ENCODE measurements at regions of chr1 and their contacts with region 1.

Region 1: DNA sequence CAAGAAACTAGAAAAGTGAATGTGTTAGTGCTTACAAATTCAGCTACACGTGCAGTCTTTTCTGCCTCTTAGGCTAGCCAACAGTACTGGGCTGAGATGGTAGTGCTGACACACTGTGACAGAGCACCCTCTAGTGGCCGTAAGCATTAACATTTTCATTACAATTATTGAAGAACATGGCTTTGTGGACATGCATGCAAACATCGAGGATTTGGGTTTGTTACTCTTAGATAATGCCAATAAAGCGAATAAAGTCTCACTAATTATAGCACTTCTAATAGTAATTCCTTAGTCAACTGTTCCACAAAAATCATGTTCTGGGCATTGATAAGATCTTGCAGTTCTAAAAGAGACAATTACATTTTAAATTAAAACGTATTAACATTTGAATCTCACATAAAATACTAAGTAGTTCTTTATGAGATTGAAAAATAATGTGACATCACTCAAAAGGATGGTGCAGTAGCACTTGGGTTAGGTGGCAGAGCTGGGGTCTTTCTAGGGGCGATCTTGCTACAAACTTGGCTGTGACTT is 47.1 kb downstream of the MYSM1 start:
- DNase-seq: peak; percentile 53 to 67
- H3K4me3 ChIP-seq: no peak overlapping the region
- H3K27ac ChIP-seq: no peak overlapping the region
- H3K4me1 ChIP-seq: no peaks in the 10 kb centered on the region
- H3K27me3 ChIP-seq: no peaks in the 10 kb centered on the region
- CTCF ChIP-seq: peak; percentile 61 to 94 (median 76)
- POLR2A ChIP-seq: no peak

Region 2: DNA sequence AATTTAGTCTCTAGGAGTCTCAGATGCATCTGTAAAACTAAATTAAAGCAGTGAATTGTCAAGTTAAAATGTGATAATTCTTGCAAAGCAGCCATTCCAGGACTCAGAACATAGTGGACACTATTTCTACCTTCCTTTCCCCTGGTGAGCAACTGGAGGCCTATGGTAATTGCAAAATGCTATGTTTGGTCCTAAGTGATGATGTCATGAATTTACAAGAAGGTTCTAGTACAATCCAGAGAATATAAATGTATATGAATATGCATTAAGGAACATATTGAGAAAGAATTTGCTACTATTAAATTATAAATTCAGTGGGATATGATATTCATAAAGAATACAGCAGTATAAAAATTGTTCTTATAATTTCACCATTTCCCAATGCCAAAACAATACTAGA is 138.8 kb before region 1 on chr1:
- intact Hi-C with region 1: loop called (anchors 5 kb)
- DNase-seq: no peak
- H3K4me3 ChIP-seq: no peak overlapping the region
- H3K27ac ChIP-seq: no peak overlapping the region
- H3K4me1 ChIP-seq: no peaks in the 10 kb centered on the region
- H3K27me3 ChIP-seq: no peaks in the 10 kb centered on the region
- CTCF ChIP-seq: no peak
- POLR2A ChIP-seq: no peak

Region 3: DNA sequence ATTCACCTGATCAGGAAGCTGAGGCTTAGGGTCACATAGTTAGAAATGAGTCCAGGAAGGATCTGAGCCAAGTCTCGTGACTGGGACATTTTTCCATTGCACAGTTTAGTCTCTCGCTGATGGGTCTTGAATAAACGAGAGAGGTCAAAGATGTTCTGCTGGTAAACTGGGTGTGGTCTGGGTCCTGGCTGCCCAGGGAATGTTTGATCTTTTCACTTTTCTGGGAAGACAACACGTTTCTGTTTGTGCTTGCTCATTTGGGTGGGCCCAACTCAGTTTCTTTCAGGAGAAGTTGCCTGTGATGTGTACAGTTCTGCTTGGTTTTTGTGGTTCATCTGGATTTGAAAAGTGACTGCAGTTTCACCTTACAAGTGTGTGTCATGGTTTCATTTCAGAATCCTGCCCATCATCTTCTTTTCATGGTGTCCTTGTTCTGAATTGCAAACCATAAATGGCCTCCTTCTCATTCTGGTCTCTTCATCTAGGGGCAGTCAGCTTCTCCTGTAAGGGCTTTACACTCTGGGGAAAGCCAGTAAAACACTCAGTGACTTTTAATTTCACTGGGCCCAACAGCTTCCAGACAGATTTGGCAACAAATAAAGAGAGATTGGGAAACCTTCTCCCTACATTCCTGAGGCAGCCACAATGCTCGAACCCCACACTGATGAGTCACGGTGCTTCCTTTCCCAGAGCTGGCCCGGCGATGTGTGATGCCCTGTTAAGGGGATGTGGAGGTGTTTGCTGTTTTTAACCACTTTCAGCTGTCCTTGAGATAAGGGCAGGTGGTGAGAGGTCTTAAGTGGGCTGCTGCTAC is 68.4 kb before region 1 on chr1:
- intact Hi-C with region 1: no loop called
- DNase-seq: peak; percentile 72 to 79
- H3K4me3 ChIP-seq: no peak overlapping the region
- H3K27ac ChIP-seq: peak overlapping the region in 2 of 3 donors; percentile 45 to 52
- H3K4me1 ChIP-seq: peaks cover 11 to 28% of the 10 kb centered on the region in 2 donors
- H3K27me3 ChIP-seq: no peaks in the 10 kb centered on the region
- CTCF ChIP-seq: no peak
- POLR2A ChIP-seq: no peak

Measured in thyroid gland (tissue), 4 donors.